Heart right ventricle (tissue), 16 donors: ENCODE measurements at regions of chr1 and their contacts with region 1.

Region 1: DNA sequence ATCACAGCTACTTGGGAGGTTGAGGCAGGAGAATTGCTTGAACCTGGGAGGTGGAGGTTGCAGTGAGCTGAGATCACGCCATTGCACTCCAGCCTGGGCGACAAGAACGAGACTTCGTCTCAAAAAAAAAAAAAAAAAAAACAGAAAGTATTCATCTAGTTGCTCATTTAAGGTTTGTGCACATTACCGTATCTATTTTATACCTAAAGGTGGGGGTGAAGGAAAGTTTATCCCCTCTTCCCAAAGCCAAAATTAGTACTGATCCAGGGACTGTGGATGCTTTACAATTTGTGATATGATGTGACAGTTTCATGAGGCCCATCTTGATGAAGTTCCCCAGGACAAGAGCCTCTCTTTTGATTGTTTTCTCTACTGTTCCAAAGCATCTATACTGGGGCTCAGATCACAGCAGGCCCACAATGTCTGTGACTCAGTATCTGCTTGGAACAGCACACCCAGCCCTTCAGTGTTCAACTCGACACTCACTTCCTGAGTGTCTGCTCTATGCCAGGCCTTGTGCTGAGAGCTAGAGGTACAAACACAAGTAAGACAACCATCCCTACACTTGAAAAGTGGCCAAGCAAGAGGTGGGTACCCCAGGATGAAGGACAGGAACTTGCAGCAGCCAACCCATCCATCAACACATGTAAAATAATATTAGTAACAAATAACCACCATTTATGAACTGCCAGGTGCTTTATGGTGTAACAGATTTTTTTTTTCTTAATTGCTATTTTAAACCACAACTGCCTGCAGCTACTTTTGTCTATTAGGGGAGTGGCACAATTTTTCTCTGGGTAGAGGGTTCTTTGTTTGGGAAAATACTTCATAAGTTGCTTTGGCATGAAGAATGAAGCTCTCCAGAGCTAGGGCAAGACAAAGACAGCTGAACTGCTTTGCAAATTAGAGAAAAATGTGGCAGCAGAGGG is 29.0 kb upstream of the KHDRBS1 start:
- DNase-seq: no peak
- ATAC-seq: peak in 4 of 8 donors; percentile 54 to 82 (median 73)
- H3K4me3 ChIP-seq: no peak overlapping the region
- H3K27ac ChIP-seq: peak overlapping the region in 5 of 10 donors; percentile 7 to 61 (median 8)
- H3K4me1 ChIP-seq: peaks cover 0 to 29% (median 6%) of the 10 kb centered on the region in 9 donors
- H3K27me3 ChIP-seq: no peaks in the 10 kb centered on the region
- CTCF ChIP-seq: no peak

Region 2: GRCh38 chr1:31663622-31664452 is 320.8 kb before region 1 on chr1:
- intact Hi-C with region 1: loop called in 1 of 10 experiments (anchors 10 kb)
- DNase-seq: peak; percentile 62 to 69
- ATAC-seq: peak in 7 of 8 donors; percentile 33 to 66 (median 52)
- H3K4me3 ChIP-seq: no peak overlapping the region
- H3K27ac ChIP-seq: no peak overlapping the region
- H3K4me1 ChIP-seq: peaks cover 6 to 26% (median 15%) of the 10 kb centered on the region in 9 donors
- H3K27me3 ChIP-seq: no peaks in the 10 kb centered on the region
- CTCF ChIP-seq: peak; percentile 83 to 92 (median 89)

Region 3: DNA sequence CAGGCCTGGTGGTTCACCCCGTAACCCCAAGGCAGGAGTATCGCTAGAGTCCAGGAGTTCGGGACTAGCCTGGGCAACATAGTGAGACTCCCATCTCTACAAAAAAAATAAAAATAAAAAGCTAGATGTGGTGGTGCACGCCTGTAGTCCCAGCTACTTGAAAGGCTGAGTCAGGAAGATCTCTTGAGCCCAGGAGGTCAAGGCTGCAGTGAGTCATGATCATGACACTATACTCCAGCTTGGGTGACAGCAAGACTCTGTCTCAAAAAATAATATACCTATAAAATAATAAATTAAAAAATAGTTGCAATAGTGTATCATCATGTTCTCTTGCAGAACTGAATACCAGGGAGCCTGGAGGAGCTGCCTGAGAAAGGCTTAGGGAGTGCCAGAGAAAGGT is 68.2 kb after region 1 on chr1:
- intact Hi-C with region 1: loop called in 1 of 10 experiments (anchors 10 kb)
- DNase-seq: no peak
- ATAC-seq: no peak
- H3K4me3 ChIP-seq: no peak overlapping the region
- H3K27ac ChIP-seq: no peak overlapping the region
- H3K4me1 ChIP-seq: no peaks in the 10 kb centered on the region
- H3K27me3 ChIP-seq: no peaks in the 10 kb centered on the region
- CTCF ChIP-seq: no peak

Region 4: GRCh38 chr1:32094746-32095521 is 110.3 kb after region 1 on chr1:
- intact Hi-C with region 1: no loop called
- DNase-seq: no peak
- ATAC-seq: no peak
- H3K4me3 ChIP-seq: no peak overlapping the region
- H3K27ac ChIP-seq: no peak overlapping the region
- H3K4me1 ChIP-seq: no peaks in the 10 kb centered on the region
- H3K27me3 ChIP-seq: no peaks in the 10 kb centered on the region
- CTCF ChIP-seq: no peak

Region 5: GRCh38 chr1:32127409-32128198 is 142.9 kb after region 1 on chr1:
- intact Hi-C with region 1: no loop called
- DNase-seq: no peak
- ATAC-seq: no peak
- H3K4me3 ChIP-seq: no peak overlapping the region
- H3K27ac ChIP-seq: peak overlapping the region in 2 of 10 donors; percentile 7 to 19
- H3K4me1 ChIP-seq: peaks cover 0 to 51% (median 30%) of the 10 kb centered on the region in 9 donors
- H3K27me3 ChIP-seq: no peaks in the 10 kb centered on the region
- CTCF ChIP-seq: peak in 1 of 9 donors; percentile 10